Calu3 (cell line): ENCODE measurements at regions of chr7 and their contacts with region 1.

Region 1: GRCh38 chr7:44712012-44712411 is 36.6 kb upstream of the ZMIZ2 start:
- DNase-seq: peak; percentile 64
- H3K4me3 Mint-ChIP-seq: peak overlapping the region; percentile 0
- H3K27ac Mint-ChIP-seq: peak overlapping the region; percentile 40
- H3K4me1 Mint-ChIP-seq: peaks cover 33% of the 10 kb centered on the region
- H3K27me3 Mint-ChIP-seq: no peaks in the 10 kb centered on the region
- CTCF ChIP-seq: no peak

Region 2: GRCh38 chr7:44573464-44574286 is 138.3 kb before region 1 on chr7 and contains the start of gene DDX56:
- CTCF ChIA-PET with region 1: no interaction called
- intact Hi-C with region 1: no loop called
- DNase-seq: peak; percentile 97
- H3K4me3 Mint-ChIP-seq: peak within 1 kb of the TSS; percentile 93
- H3K27ac Mint-ChIP-seq: peak within 1 kb of the TSS; percentile 86
- H3K4me1 Mint-ChIP-seq: peaks cover 26% of the 10 kb centered on the region
- H3K27me3 Mint-ChIP-seq: no peaks in the 10 kb centered on the region
- CTCF ChIP-seq: no peak
- total RNA-seq, gene DDX56: 157 and 168 TPM in 2 replicates

Region 3: DNA sequence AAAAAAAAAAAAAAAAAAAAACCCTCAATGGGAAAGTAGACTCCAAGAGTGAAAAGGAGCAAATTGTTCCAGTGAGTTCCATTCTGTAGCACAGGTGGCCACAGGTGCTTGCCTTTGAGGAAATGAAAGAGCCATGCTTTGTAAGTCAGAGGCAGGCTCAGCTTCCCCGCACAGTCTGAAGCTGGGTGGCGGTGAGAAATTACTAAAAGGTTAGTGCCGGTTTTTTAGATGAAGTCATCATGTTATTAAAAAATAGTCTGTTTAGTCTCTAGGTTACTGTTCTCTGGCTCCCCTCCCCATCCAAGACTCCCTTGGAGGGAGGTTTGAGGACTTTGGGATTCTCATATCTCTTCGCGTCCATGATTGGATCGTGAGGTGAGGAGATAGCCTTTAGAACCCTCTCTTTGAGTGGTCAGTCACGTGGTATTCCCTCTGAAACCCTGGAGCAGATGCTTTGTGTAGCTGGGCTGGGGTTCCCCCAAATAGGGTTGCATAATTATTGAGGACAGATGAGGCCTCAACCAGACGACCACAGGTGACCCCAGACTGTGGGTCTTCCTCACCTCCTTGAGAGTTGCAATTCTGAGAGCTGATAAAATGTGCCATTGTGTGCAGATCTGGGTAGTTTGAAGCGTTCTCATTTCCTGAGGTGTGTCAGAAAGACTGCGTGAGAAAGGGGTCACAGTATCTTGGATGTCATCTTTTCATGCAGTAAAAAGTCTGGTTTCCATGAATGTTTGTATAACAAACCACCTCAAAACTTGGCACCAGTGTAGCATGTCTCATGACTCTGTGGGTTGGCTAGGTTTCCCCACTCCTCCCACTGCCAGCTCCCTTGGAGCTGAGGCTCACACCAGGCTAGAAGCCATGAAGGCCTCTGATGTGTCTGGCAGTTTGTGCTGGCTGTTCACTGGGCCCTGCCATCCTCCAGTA is 78.5 kb before region 1 on chr7:
- CTCF ChIA-PET with region 1: interaction called, 10 read pairs
- intact Hi-C with region 1: no loop called
- DNase-seq: peak; percentile 75
- H3K4me3 Mint-ChIP-seq: peak overlapping the region; percentile 27
- H3K27ac Mint-ChIP-seq: peak overlapping the region; percentile 86
- H3K4me1 Mint-ChIP-seq: peaks cover 76% of the 10 kb centered on the region
- H3K27me3 Mint-ChIP-seq: no peaks in the 10 kb centered on the region
- CTCF ChIP-seq: no peak

Region 4: DNA sequence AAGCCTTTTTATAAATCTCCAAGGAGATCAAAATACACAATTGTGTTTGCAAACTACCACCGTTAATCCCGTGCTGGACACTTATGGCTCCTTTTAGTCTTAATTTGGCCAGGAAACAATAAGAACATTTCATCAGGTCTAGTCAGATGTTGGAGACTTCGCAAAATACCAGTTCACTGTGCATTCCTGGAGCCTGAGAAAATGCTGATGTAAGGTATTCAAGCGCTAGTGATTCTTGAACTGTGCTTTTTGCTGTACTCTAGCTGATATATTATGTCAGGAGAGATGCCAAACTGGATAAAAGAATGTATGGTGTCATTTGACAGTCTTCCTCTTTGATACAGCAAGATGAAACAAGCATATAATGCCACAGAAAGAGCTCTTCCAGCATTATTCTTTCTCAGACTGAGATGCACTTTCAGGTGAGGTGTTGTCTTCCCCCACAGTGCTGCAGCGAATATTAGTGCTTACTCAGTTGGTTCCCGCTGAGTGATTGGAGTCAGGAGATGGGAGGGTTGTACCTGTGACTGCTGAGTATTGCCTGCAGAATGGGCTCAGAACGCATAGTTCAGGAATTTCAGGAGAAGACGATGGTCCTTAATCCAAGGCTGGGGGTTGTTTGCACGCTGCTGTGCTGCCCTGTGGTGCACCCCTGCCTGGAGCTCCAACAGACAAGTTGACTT is 46.3 kb before region 1 on chr7:
- CTCF ChIA-PET with region 1: no interaction called
- intact Hi-C with region 1: no loop called
- DNase-seq: no peak
- H3K4me3 Mint-ChIP-seq: no peak overlapping the region
- H3K27ac Mint-ChIP-seq: no peak overlapping the region
- H3K4me1 Mint-ChIP-seq: no peaks in the 10 kb centered on the region
- H3K27me3 Mint-ChIP-seq: no peaks in the 10 kb centered on the region
- CTCF ChIP-seq: no peak

Region 5: GRCh38 chr7:45174966-45175765 is 463.2 kb after region 1 on chr7:
- CTCF ChIA-PET with region 1: no interaction called
- intact Hi-C with region 1: no loop called
- DNase-seq: no peak
- H3K4me3 Mint-ChIP-seq: no peak overlapping the region
- H3K27ac Mint-ChIP-seq: no peak overlapping the region
- H3K4me1 Mint-ChIP-seq: no peaks in the 10 kb centered on the region
- H3K27me3 Mint-ChIP-seq: peaks cover 86% of the 10 kb centered on the region
- CTCF ChIP-seq: no peak